GM12878 (cell line): ENCODE measurements at regions of chr9 and their contacts with region 1.

Region 1: GRCh38 chr9:22452415-22453010 is 5.9 kb downstream of the DMRTA1 start:
- DNase-seq: no peak
- ATAC-seq: peak; percentile 73
- H3K4me3 ChIP-seq: no peak overlapping the region
- H3K27ac ChIP-seq: no peak overlapping the region
- H3K4me1 ChIP-seq: no peaks in the 10 kb centered on the region
- H3K27me3 ChIP-seq: peaks cover 0 to 1% of the 10 kb centered on the region in 2 experiments; a peak in 1 of 4 replicates
- CTCF ChIP-seq: peak; percentile 70 to 73 (median 71)
- EP300 ChIP-seq: no peak
- POLR2A ChIP-seq: no peak
- RAD21 ChIP-seq: peak; percentile 62

Region 2: DNA sequence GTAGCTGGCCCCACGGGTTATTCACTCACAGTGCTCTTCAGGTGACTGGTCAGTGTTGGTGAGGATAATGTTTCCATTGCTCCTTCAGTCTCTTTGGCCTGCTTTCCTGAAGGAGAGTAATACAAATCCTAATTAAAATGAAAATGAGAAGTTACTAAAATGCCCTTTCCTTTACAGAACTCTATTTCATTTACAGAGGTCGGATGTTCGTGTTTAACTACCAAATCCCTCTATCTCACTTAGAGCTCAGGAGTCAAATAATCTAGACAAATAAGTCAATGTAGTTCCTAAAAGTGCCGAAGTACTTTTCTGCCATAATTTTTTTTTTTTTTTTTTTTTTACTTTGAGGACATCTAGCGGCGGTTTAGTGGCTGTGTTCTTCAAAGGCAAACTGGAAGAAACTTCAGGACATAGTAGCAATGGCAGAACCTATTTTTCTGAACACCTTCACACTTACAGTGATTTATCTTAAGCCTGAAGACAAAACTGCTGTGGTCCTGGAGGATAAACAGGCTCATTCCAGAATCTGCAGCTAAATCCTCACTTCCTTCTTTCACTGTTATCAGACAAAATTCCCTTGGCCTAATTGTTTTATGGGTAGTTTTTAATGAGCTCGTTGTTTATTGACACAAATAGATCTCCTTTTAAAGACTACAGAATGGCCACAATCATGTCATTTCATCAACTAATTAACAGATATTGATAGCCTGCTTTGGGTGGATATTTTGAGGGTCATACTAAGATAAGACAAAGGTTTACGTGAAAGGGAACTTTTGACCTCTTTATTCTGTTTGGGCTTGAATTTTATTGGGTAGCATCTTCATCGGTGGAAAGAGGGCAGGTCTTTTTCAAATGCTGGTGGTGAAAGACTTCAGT is 213.5 kb before region 1 on chr9:
- CTCF ChIA-PET with region 1: interaction called, 49 read pairs
- POLR2A ChIA-PET with region 1: no interaction called
- RAD21 ChIA-PET with region 1: interaction called, 21 read pairs
- SMC1A ChIA-PET with region 1: interaction called, 21 read pairs
- in situ Hi-C with region 1: no loop called
- intact Hi-C with region 1: loop called (anchors 1 kb)
- DNase-seq: no peak
- ATAC-seq: peak; percentile 50
- H3K4me3 ChIP-seq: no peak overlapping the region
- H3K27ac ChIP-seq: no peak overlapping the region
- H3K4me1 ChIP-seq: peaks cover 19% of the 10 kb centered on the region
- H3K27me3 ChIP-seq: peaks cover 0 to 7% of the 10 kb centered on the region in 2 experiments; a peak in 2 of 4 replicates
- CTCF ChIP-seq: peak in 2 of 3 experiments; percentile 36 to 43; a peak in 4 of 6 replicates
- EP300 ChIP-seq: no peak
- POLR2A ChIP-seq: no peak
- RAD21 ChIP-seq: peak; percentile 37; the same call in 1 of the 2 replicates

Region 3: GRCh38 chr9:22244141-22245011 is 208.1 kb before region 1 on chr9:
- CTCF ChIA-PET with region 1: interaction called, 49 read pairs
- POLR2A ChIA-PET with region 1: no interaction called
- RAD21 ChIA-PET with region 1: interaction called, 21 read pairs
- SMC1A ChIA-PET with region 1: interaction called, 21 read pairs
- in situ Hi-C with region 1: loop called (anchors 5 kb)
- intact Hi-C with region 1: loop called (anchors 1 kb)
- DNase-seq: no peak
- ATAC-seq: peak; percentile 72
- H3K4me3 ChIP-seq: no peak overlapping the region
- H3K27ac ChIP-seq: no peak overlapping the region
- H3K4me1 ChIP-seq: peaks cover 19% of the 10 kb centered on the region
- H3K27me3 ChIP-seq: peaks cover 0 to 7% of the 10 kb centered on the region in 2 experiments; a peak in 2 of 4 replicates
- CTCF ChIP-seq: peak; percentile 53 to 59 (median 59)
- EP300 ChIP-seq: no peak
- POLR2A ChIP-seq: no peak
- RAD21 ChIP-seq: peak; percentile 76

Region 4: GRCh38 chr9:22265038-22265437 is 187.5 kb before region 1 on chr9:
- CTCF ChIA-PET with region 1: no interaction called
- POLR2A ChIA-PET with region 1: no interaction called
- RAD21 ChIA-PET with region 1: no interaction called
- SMC1A ChIA-PET with region 1: no interaction called
- in situ Hi-C with region 1: no loop called
- intact Hi-C with region 1: no loop called
- DNase-seq: no peak
- ATAC-seq: no peak
- H3K4me3 ChIP-seq: no peak overlapping the region
- H3K27ac ChIP-seq: no peak overlapping the region
- H3K4me1 ChIP-seq: no peaks in the 10 kb centered on the region
- H3K27me3 ChIP-seq: no peaks in the 10 kb centered on the region
- CTCF ChIP-seq: no peak
- EP300 ChIP-seq: no peak
- POLR2A ChIP-seq: no peak
- RAD21 ChIP-seq: no peak

Region 5: DNA sequence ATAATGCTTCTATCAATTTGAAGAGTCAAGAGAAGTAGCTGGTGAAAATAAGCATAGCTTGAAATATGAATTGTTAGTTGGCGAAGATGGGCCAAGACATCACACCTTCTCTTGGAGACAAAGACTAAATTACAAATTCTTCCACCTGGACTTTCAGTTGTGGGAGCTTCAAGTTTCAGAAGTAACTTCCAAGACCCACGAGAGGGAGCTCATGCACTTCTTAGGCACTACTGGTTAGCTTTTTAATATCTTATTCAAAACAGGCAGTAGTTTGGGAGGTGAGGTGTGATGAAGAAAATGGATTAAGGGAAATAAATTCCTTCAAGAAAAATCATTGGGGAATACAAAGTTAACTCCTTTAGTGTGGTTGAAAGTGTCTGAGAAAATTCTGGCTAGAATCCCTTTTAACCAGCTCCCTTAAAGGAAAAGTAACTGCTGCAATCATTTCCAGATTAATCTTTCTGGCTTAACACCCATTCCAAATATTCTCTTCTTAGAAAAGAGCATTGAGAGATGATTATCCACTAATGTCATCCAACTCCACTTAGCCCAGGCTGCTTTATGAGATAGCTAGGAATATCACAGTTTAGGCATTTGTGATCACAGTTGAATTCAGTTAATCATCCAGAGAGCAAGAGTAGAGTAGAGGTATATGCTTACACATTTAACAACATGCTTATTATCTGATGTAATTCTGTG is 145.4 kb before region 1 on chr9:
- CTCF ChIA-PET with region 1: interaction called, 32 read pairs
- POLR2A ChIA-PET with region 1: no interaction called
- RAD21 ChIA-PET with region 1: interaction called, 17 read pairs
- SMC1A ChIA-PET with region 1: interaction called, 15 read pairs
- in situ Hi-C with region 1: no loop called
- intact Hi-C with region 1: loop called (anchors 1 kb)
- DNase-seq: no peak
- ATAC-seq: 0 out of 3 replicates have a peak, but pooled peaks have one; percentile 20
- H3K4me3 ChIP-seq: no peak overlapping the region
- H3K27ac ChIP-seq: no peak overlapping the region
- H3K4me1 ChIP-seq: no peaks in the 10 kb centered on the region
- H3K27me3 ChIP-seq: no peaks in the 10 kb centered on the region
- CTCF ChIP-seq: peak; percentile 27 to 42 (median 29); a peak in 4 of 6 replicates
- EP300 ChIP-seq: no peak
- POLR2A ChIP-seq: no peak
- RAD21 ChIP-seq: peak; percentile 52

Region 6: DNA sequence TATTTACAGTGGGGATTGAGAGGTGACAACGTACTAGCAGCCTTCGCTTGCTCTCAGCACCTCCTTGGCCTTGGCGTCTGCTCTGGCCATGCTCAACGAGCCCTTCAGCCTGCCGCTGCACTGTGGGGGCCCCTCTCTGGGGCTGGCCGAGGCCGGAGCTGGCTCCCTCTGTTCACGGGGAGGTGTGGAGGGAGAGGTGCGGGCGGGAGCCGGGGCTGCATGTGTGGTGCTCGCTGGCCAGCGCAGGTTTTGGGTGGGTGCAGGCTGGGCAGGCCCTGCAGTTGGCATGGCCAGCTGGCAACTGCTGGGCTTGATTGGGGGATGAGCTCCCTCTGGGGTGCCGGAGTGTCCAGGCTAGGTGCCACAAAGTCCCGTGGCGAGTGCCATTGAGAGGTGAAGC is 11.7 kb before region 1 on chr9:
- CTCF ChIA-PET with region 1: interaction called, 16 read pairs
- POLR2A ChIA-PET with region 1: no interaction called
- RAD21 ChIA-PET with region 1: no interaction called
- SMC1A ChIA-PET with region 1: no interaction called
- in situ Hi-C with region 1: no loop called
- intact Hi-C with region 1: no loop called
- DNase-seq: no peak
- ATAC-seq: no peak
- H3K4me3 ChIP-seq: no peak overlapping the region
- H3K27ac ChIP-seq: no peak overlapping the region
- H3K4me1 ChIP-seq: no peaks in the 10 kb centered on the region
- H3K27me3 ChIP-seq: no peaks in the 10 kb centered on the region
- CTCF ChIP-seq: no peak
- EP300 ChIP-seq: no peak
- POLR2A ChIP-seq: no peak
- RAD21 ChIP-seq: no peak